Activated CD4-positive, alpha-beta T cell treated with anti-CD3 and anti-CD28 coated beads for 36 hours (primary cell): ENCODE measurements at regions of chr22 and their contacts with region 1.

Region 1: DNA sequence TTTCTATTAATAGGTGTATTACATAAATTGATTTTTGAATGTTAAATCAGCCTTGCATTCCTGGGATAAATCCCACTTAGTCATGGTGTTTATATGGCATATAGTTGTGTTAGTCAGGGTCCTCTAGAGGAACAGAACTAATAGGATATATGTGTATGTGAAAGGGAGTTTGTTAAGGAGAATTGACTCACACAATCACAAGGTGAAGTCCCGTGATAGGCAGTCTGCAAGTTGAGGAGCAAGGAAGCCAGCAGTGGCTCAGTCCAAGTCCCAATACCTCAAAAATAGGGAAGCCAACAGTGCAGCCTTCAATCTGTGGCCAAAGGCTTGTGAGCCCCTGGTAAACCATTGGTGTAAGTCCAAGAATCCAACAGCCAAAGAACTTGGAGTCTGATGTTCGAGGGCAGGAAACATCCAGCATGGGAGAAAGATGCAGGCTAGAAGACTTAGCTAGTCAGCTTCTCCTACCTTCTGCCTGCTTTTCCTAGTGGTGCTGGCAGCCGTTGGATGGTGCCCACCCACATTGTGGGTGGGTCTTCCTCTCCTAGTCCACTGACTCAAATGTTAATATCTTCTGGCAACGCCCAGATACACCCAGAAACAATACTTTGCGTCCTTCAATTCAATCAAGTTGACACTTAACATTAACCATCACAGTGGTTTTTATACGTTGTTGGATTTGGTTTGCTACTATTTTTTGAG is 12.9 kb downstream of the SFI1 start:
- DNase-seq: no peak
- ATAC-seq: no peak
- H3K4me3 Mint-ChIP-seq: no peak overlapping the region
- H3K27ac Mint-ChIP-seq: peak overlapping the region; percentile 9
- H3K4me1 Mint-ChIP-seq: peaks cover 53% of the 10 kb centered on the region
- H3K27me3 Mint-ChIP-seq: no peaks in the 10 kb centered on the region

Region 2: GRCh38 chr22:31526270-31526669 is 17.1 kb after region 1 on chr22:
- CTCF ChIA-PET with region 1: interaction called, 4 read pairs
- POLR2A ChIA-PET with region 1: interaction called, 4 read pairs
- intact Hi-C with region 1: loop called in 1 of 2 experiments (anchors 2 kb)
- DNase-seq: peak; percentile 69
- ATAC-seq: peak; percentile 86
- H3K4me3 Mint-ChIP-seq: no peak overlapping the region
- H3K27ac Mint-ChIP-seq: peak overlapping the region; percentile 97
- H3K4me1 Mint-ChIP-seq: peaks cover 73% of the 10 kb centered on the region
- H3K27me3 Mint-ChIP-seq: no peaks in the 10 kb centered on the region

Region 3: GRCh38 chr22:31929167-31929930 is 420.1 kb after region 1 on chr22:
- CTCF ChIA-PET with region 1: no interaction called
- POLR2A ChIA-PET with region 1: no interaction called
- intact Hi-C with region 1: no loop called
- DNase-seq: no peak
- ATAC-seq: no peak
- H3K4me3 Mint-ChIP-seq: no peak overlapping the region
- H3K27ac Mint-ChIP-seq: no peak overlapping the region
- H3K4me1 Mint-ChIP-seq: no peaks in the 10 kb centered on the region
- H3K27me3 Mint-ChIP-seq: peaks cover 15% of the 10 kb centered on the region